ENCODE measurements at regions of chr1 and their contacts with region 1.

Region 1: GRCh38 chr1:108963052-108963686 is at the start of gene CLCC1:
- DNase-seq: peak; percentile 89 to 96 (median 94)
- H3K4me3 ChIP-seq: peak within 1 kb of the TSS; percentile 74 to 96 (median 83)
- H3K27ac ChIP-seq: peak within 1 kb of the TSS; percentile 79 to 93
- H3K4me1 ChIP-seq: peaks cover 8 to 14% (median 9%) of the 10 kb centered on the region in 4 experiments
- H3K27me3 ChIP-seq: no peaks in the 10 kb centered on the region

Region 2: GRCh38 chr1:109099938-109100773 is 137.0 kb after region 1 on chr1:
- CTCF ChIA-PET with region 1: no interaction called
- POLR2A ChIA-PET with region 1: interaction called, 10 read pairs
- DNase-seq: peak; percentile 99
- H3K4me3 ChIP-seq: peak overlapping the region; percentile 70 to 89 (median 79)
- H3K27ac ChIP-seq: peak overlapping the region; percentile 74 to 91
- H3K4me1 ChIP-seq: peaks cover 0 to 17% (median 5%) of the 10 kb centered on the region in 4 experiments
- H3K27me3 ChIP-seq: no peaks in the 10 kb centered on the region

Region 3: DNA sequence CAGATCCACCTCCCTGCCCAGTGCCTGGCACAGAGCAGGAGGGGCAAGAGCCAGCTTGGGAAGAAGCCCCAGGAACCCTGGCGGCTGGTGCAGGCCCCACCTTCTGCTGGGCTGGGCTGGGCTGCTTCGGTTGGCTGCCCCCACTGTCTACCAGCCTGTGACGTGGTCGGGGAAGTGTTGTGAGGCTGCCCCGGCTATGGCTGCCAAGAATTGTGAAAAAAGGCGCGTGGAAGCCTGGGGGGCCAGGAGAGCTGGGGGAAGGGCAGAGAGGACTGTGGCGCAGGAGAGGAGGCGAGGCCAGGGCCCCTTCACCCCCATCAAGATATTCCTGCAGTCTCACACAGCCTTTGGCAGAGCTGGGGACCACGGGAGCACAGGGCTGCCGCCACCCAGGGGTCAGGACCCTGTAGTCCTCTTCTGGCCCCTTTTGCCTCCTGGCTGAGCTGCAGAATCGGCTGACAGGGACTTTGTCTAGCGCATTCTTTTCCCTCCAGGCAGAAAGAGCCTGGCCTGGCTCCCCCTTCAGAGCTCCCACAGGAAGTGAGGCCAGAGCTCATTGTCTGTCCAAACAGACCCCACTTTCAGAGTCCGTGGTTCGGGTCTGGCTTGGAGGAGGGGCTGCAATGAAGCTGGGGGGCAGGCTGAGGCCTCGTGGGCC is 290.4 kb after region 1 on chr1:
- CTCF ChIA-PET with region 1: no interaction called
- POLR2A ChIA-PET with region 1: interaction called, 12 read pairs
- DNase-seq: no peak
- H3K4me3 ChIP-seq: no peak overlapping the region
- H3K27ac ChIP-seq: peak overlapping the region in 1 of 2 experiments; percentile 49
- H3K4me1 ChIP-seq: peaks cover 0 to 13% (median 9%) of the 10 kb centered on the region in 4 experiments
- H3K27me3 ChIP-seq: peaks cover 0 to 81% (median 22%) of the 10 kb centered on the region in 5 experiments

Measured in common myeloid progenitor, CD34-positive (primary cell).